PC-9 (cell line): ENCODE measurements at regions of chr3 and their contacts with region 1.

Region 1: DNA sequence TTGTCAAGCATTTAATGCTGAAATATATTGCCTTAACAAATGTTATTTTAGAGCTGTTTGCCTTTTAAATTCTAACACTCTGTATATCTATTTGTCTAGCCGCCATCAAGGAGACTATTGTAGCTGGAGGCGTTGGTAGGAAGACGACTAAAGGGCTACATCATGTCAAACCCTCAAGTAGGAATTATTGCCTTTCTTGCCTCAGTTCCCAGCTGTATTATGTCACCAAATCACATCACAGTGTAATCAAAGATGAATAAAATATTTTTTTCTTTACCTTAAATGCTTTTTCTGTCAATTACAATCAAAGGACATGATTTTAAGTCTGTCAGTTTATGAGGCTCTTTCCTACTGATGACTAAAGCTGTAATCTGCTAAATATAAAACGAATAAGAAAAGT is 233.1 kb downstream of the ZIC4 start:
- DNase-seq: no peak
- H3K4me3 ChIP-seq: no peak overlapping the region
- H3K27ac ChIP-seq: no peak overlapping the region
- H3K4me1 ChIP-seq: no peaks in the 10 kb centered on the region
- H3K27me3 ChIP-seq: no peaks in the 10 kb centered on the region
- CTCF ChIP-seq: no peak

Region 2: GRCh38 chr3:146664403-146664802 is 508.9 kb before region 1 on chr3:
- CTCF ChIA-PET with region 1: no interaction called
- POLR2A ChIA-PET with region 1: interaction called, 16 read pairs
- intact Hi-C with region 1: no loop called
- DNase-seq: no peak
- H3K4me3 ChIP-seq: no peak overlapping the region
- H3K27ac ChIP-seq: no peak overlapping the region
- H3K4me1 ChIP-seq: no peaks in the 10 kb centered on the region
- H3K27me3 ChIP-seq: no peaks in the 10 kb centered on the region
- CTCF ChIP-seq: no peak

Region 3: DNA sequence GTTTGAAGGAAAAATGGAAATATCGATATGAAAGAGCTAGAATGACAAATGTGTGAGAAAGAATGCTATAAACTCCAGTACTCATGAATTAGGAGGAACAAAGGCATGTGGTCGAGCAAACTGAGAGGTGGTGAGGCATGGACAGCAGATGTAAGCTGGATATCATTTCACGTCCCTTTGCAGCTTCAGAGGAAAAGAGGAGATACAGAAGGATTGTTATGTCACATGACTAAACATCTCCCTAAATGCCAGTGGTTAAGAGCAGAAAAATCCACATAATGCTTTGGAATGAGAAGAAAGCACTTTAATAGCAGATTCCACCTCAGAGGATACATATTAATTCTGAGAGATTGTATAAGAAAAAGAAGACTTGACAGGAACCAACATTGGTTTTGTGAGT is 15.6 kb before region 1 on chr3:
- CTCF ChIA-PET with region 1: no interaction called
- POLR2A ChIA-PET with region 1: no interaction called
- intact Hi-C with region 1: no loop called
- DNase-seq: no peak
- H3K4me3 ChIP-seq: no peak overlapping the region
- H3K27ac ChIP-seq: no peak overlapping the region
- H3K4me1 ChIP-seq: no peaks in the 10 kb centered on the region
- H3K27me3 ChIP-seq: no peaks in the 10 kb centered on the region
- CTCF ChIP-seq: no peak

Region 4: GRCh38 chr3:147189016-147189415 is 15.8 kb after region 1 on chr3:
- CTCF ChIA-PET with region 1: no interaction called
- POLR2A ChIA-PET with region 1: no interaction called
- intact Hi-C with region 1: no loop called
- DNase-seq: no peak
- H3K4me3 ChIP-seq: no peak overlapping the region
- H3K27ac ChIP-seq: no peak overlapping the region
- H3K4me1 ChIP-seq: no peaks in the 10 kb centered on the region
- H3K27me3 ChIP-seq: no peaks in the 10 kb centered on the region
- CTCF ChIP-seq: no peak

Region 5: GRCh38 chr3:147222253-147222652 is 49.0 kb after region 1 on chr3:
- CTCF ChIA-PET with region 1: no interaction called
- POLR2A ChIA-PET with region 1: no interaction called
- intact Hi-C with region 1: no loop called
- DNase-seq: no peak
- H3K4me3 ChIP-seq: no peak overlapping the region
- H3K27ac ChIP-seq: no peak overlapping the region
- H3K4me1 ChIP-seq: no peaks in the 10 kb centered on the region
- H3K27me3 ChIP-seq: no peaks in the 10 kb centered on the region
- CTCF ChIP-seq: no peak